GM12878 (cell line): ENCODE measurements at regions of chr1 and their contacts with region 1.

Region 1: GRCh38 chr1:3624200-3625136 is at the start of gene TPRG1L:
- DNase-seq: peak; percentile 74
- ATAC-seq: peak; percentile 98
- H3K4me3 ChIP-seq: peak within 1 kb of the TSS; percentile 81
- H3K27ac ChIP-seq: no peak within 1 kb of the TSS; the same call in 1 of the 2 replicates
- H3K4me1 ChIP-seq: peaks cover 5% of the 10 kb centered on the region; the same call in 1 of the 2 replicates
- H3K27me3 ChIP-seq: no peaks in the 10 kb centered on the region
- CTCF ChIP-seq: no peak
- EP300 ChIP-seq: no peak
- POLR2A ChIP-seq: peak; percentile 71
- RAD21 ChIP-seq: no peak
- polyA plus RNA-seq, gene TPRG1L: 1.5 to 5.2 TPM

Region 2: GRCh38 chr1:3483801-3484444 is 140.5 kb before region 1 on chr1:
- CTCF ChIA-PET with region 1: interaction called, 9 read pairs
- POLR2A ChIA-PET with region 1: no interaction called
- RAD21 ChIA-PET with region 1: interaction called, 3 read pairs
- SMC1A ChIA-PET with region 1: no interaction called
- in situ Hi-C with region 1: loop called (anchors 10 kb)
- intact Hi-C with region 1: no loop called
- DNase-seq: no peak
- ATAC-seq: peak; percentile 79
- H3K4me3 ChIP-seq: no peak overlapping the region
- H3K27ac ChIP-seq: no peak overlapping the region
- H3K4me1 ChIP-seq: no peaks in the 10 kb centered on the region
- H3K27me3 ChIP-seq: no peaks in the 10 kb centered on the region
- CTCF ChIP-seq: peak; percentile 59 to 89 (median 68)
- EP300 ChIP-seq: no peak
- POLR2A ChIP-seq: no peak
- RAD21 ChIP-seq: peak; percentile 33

Region 3: GRCh38 chr1:3530086-3530925 is 94.2 kb before region 1 on chr1:
- CTCF ChIA-PET with region 1: no interaction called
- POLR2A ChIA-PET with region 1: no interaction called
- RAD21 ChIA-PET with region 1: no interaction called
- SMC1A ChIA-PET with region 1: no interaction called
- in situ Hi-C with region 1: no loop called
- intact Hi-C with region 1: no loop called
- DNase-seq: no peak
- ATAC-seq: no peak
- H3K4me3 ChIP-seq: no peak overlapping the region
- H3K27ac ChIP-seq: no peak overlapping the region
- H3K4me1 ChIP-seq: no peaks in the 10 kb centered on the region
- H3K27me3 ChIP-seq: peaks cover 0 to 4% of the 10 kb centered on the region in 2 experiments; a peak in 3 of 4 replicates
- CTCF ChIP-seq: no peak
- EP300 ChIP-seq: no peak
- POLR2A ChIP-seq: no peak
- RAD21 ChIP-seq: no peak

Region 4: DNA sequence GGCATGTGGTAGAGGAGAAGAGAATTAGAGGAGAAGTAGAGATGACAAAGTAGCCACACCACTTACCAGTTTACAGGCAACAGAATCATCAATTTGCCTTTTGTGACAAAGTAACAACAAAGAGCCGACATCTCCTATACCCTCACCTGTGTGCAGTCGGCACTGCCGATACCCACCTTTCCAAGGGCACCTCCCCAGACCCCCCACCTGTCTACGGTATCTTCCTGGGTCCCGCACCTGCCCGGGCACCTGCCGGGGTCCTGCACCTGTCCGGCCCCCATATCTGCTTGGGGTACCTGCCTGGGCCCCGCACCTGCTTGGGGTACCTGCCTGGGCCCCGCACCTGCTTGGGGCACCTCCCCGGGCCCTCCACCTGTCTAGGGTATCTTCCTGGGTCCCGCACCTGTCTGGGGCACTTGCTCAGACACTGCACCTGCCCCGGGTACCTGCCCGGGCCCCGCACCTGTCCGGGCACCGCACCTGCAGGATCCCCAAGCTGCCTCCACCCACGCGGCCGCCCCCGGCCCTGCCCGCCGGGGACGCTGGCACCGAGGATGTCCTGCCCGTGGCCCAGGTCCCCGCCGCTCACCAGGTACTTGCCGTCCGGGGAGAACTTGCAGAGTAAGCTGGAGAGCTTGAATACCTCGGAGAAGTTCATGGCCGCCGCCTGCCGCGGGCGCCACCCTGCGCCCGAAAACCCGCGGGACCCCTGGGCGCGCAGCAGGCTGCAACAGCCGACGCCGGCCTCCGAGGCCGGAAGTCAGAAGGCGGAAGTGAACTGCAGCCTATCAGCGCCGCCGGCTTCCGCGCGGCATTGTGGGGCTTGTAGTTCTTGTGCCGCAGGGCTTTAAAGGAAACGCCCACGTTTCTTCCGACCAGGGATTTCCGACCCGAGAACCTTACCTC is 25.1 kb after region 1 on chr1 and contains the start of gene WRAP73:
- CTCF ChIA-PET with region 1: interaction called, 5 read pairs
- POLR2A ChIA-PET with region 1: interaction called, 3 read pairs
- RAD21 ChIA-PET with region 1: interaction called, 4 read pairs
- SMC1A ChIA-PET with region 1: interaction called, 7 read pairs
- in situ Hi-C with region 1: no loop called
- intact Hi-C with region 1: loop called (anchors 2 kb)
- DNase-seq: peak; percentile 76
- ATAC-seq: peak; percentile 74
- H3K4me3 ChIP-seq: peak within 1 kb of the TSS; percentile 84
- H3K27ac ChIP-seq: peak within 1 kb of the TSS; percentile 68; the same call in 1 of the 2 replicates
- H3K4me1 ChIP-seq: peaks cover 15% of the 10 kb centered on the region
- H3K27me3 ChIP-seq: no peaks in the 10 kb centered on the region
- CTCF ChIP-seq: peak; percentile 25 to 37 (median 32); a peak in 3 of 6 replicates
- EP300 ChIP-seq: no peak
- POLR2A ChIP-seq: peak; percentile 79
- RAD21 ChIP-seq: no peak
- polyA plus RNA-seq, gene WRAP73: 3.2 to 7.6 TPM

Region 5: GRCh38 chr1:3727042-3727824 is 102.8 kb after region 1 on chr1:
- CTCF ChIA-PET with region 1: interaction called, 30 read pairs
- POLR2A ChIA-PET with region 1: no interaction called
- RAD21 ChIA-PET with region 1: interaction called, 12 read pairs
- SMC1A ChIA-PET with region 1: interaction called, 10 read pairs
- in situ Hi-C with region 1: no loop called
- intact Hi-C with region 1: loop called (anchors 1 kb)
- DNase-seq: no peak
- ATAC-seq: peak; percentile 75
- H3K4me3 ChIP-seq: no peak overlapping the region
- H3K27ac ChIP-seq: no peak overlapping the region
- H3K4me1 ChIP-seq: no peaks in the 10 kb centered on the region
- H3K27me3 ChIP-seq: no peaks in the 10 kb centered on the region
- CTCF ChIP-seq: peak; percentile 48 to 50 (median 49); a peak in 5 of 6 replicates
- EP300 ChIP-seq: no peak
- POLR2A ChIP-seq: no peak
- RAD21 ChIP-seq: peak; percentile 47